Activated B cell treated with CpG ODN at 0.5 μM for 24 hours (primary cell): ENCODE measurements at regions of chr1 and their contacts with region 1.

Region 1: DNA sequence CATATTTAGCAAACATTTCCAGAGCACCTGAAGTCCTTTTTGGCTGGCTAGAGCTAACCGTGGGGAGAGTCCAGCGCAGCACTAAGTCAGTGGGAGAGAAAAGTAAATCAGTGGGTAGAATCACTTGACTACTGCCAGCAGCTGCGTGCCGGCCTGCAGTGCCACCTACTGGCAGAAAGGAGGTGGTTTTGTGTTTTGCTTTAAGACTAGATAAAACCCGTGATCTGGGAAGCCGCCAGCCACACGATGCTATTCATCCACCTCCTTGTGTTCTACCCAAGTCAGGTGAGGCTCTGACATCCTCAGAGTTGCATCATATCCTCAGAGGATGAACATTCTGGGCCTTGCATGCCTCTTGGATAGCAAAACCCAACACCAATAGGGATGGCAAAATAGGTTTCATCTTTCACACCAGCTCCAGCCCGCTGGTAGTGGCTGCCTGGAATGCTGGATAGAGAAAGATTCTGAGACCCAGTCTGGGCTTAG is 14.1 kb upstream of the HEYL start:
- DNase-seq: peak; percentile 53
- ATAC-seq: peak; percentile 80
- H3K4me3 Mint-ChIP-seq: no peak overlapping the region
- H3K27ac Mint-ChIP-seq: no peak overlapping the region
- H3K4me1 Mint-ChIP-seq: peaks cover 7% of the 10 kb centered on the region
- H3K27me3 Mint-ChIP-seq: peaks cover 14% of the 10 kb centered on the region
- CTCF ChIP-seq: peak; percentile 75

Region 2: GRCh38 chr1:39196244-39197215 is 457.1 kb before region 1 on chr1:
- CTCF ChIA-PET with region 1: no interaction called
- POLR2A ChIA-PET with region 1: no interaction called
- intact Hi-C with region 1: no loop called
- DNase-seq: no peak
- ATAC-seq: peak; percentile 35
- H3K4me3 Mint-ChIP-seq: peak overlapping the region; percentile 61
- H3K27ac Mint-ChIP-seq: peak overlapping the region; percentile 91
- H3K4me1 Mint-ChIP-seq: peaks cover 76% of the 10 kb centered on the region
- H3K27me3 Mint-ChIP-seq: no peaks in the 10 kb centered on the region
- CTCF ChIP-seq: no peak

Region 3: DNA sequence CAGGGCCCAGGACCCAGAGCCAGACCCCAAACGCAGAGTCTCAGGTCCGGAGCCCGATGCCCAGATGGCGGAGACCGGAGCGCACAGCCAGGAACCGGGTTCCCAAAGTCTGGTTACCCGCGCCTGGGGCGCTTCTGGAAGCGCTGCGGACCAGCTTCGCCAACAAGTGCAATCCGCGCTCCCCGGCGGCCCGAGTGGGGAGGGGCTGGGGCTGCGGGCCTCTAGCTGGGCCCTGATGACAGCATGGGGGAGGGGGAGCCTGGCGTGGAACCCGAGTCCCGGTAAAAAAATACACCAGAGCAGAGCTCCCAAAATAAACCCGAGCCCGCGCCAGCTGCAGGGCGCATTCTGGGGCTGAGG is 17.8 kb after region 1 on chr1:
- CTCF ChIA-PET with region 1: interaction called, 10 read pairs
- POLR2A ChIA-PET with region 1: no interaction called
- intact Hi-C with region 1: no loop called
- DNase-seq: no peak
- ATAC-seq: no peak
- H3K4me3 Mint-ChIP-seq: no peak overlapping the region
- H3K27ac Mint-ChIP-seq: no peak overlapping the region
- H3K4me1 Mint-ChIP-seq: peaks cover 11% of the 10 kb centered on the region
- H3K27me3 Mint-ChIP-seq: peaks cover 33% of the 10 kb centered on the region
- CTCF ChIP-seq: no peak

Region 4: DNA sequence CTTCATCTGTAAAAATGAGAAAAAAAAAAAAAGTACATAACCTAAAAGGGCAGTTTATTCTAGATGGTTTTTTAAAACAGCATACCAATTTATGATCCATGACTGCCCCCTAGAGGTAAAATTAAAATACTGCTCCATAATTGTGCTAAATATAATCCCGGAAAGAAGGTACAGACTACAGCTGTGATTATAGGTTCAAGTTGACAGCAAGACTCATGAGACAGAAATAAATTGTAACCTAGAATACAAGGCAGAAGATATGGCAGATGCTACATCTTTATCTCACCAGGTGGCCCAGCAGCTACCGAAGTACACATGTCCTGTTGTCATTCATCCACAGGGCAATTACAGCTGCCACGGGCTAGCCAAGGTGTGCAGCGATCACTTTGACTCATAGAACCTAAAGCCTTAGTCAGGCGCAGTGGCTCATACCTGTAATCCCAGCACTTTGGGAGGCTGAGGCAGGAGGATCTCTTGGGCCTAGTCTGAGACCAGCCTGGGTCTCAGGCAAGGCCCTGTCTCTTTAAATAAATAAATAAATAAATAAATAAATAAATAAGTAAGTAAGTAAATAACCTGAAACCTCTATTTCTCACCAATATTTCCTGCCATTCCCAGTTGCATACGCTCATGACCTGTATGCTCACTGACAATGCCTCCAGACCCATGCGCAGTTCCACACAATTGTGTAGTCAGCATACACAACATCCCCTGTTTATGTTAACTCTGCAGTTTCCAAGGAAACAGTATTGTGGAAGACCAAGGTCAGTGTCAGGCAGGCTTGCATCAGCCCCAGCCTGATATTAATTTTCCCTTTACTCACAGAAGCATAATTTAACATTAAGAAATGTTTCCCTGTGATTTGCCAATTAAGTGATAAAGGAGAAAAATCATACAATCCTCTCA is 66.8 kb after region 1 on chr1:
- CTCF ChIA-PET with region 1: interaction called, 3 read pairs
- POLR2A ChIA-PET with region 1: no interaction called
- intact Hi-C with region 1: loop called (anchors 1 kb)
- DNase-seq: no peak
- ATAC-seq: peak; percentile 62
- H3K4me3 Mint-ChIP-seq: no peak overlapping the region
- H3K27ac Mint-ChIP-seq: no peak overlapping the region
- H3K4me1 Mint-ChIP-seq: peaks cover 2% of the 10 kb centered on the region
- H3K27me3 Mint-ChIP-seq: peaks cover 37% of the 10 kb centered on the region
- CTCF ChIP-seq: peak; percentile 51